Heart right ventricle (tissue), 16 donors: ENCODE measurements at regions of chr16 and their contacts with region 1.

Region 1: GRCh38 chr16:56866943-56867830 is 2.2 kb downstream of the SLC12A3 start:
- DNase-seq: peak in 1 of 2 donors; percentile 40
- ATAC-seq: peak in 6 of 8 donors; percentile 15 to 53 (median 36)
- H3K4me3 ChIP-seq: no peak overlapping the region
- H3K27ac ChIP-seq: no peak overlapping the region
- H3K4me1 ChIP-seq: peaks cover 0 to 19% (median 6%) of the 10 kb centered on the region in 9 donors
- H3K27me3 ChIP-seq: no peaks in the 10 kb centered on the region
- CTCF ChIP-seq: peak; percentile 71 to 86 (median 81)

Region 2: DNA sequence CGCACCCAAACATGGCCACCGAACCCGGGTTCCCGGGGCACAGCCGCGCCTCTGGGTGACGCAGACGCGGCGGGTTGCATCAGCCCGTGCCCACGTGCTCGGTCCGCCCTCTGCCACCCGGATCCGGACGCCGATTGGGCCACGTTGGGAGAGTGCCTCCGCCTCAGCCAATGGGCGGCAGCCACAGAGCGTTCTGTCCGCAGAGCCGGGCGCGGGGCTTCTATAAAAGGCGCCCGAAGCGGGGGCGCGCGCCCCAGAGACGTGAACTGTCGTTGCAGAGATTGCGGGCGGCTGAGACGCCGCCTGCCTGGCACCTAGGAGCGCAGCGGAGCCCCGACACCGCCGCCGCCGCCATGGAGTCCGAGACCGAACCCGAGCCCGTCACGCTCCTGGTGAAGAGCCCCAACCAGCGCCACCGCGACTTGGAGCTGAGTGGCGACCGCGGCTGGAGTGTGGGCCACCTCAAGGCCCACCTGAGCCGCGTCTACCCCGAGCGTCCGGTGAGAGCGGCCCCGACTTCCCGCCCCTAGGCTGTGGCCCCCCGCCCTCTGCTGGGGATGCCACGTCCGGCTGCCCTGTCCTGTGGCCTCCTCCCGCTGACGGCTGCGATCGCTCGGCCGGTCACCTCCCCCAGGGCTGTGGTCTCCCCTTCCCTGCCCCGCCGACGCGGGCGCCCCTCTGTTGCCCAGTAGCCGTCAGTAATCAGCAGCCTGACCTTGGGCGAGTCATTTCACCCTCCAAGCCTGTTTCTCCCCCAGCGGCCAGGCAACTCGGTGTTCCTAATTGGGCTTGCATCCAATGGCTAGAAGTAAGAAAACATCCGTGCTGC is 64.9 kb after region 1 on chr16 and contains the start of gene HERPUD1:
- intact Hi-C with region 1: loop called in 3 of 10 experiments (anchors 5 kb)
- DNase-seq: peak; percentile 99
- ATAC-seq: peak; percentile 94 to 98 (median 96)
- H3K4me3 ChIP-seq: peak within 1 kb of the TSS; percentile 61 to 100 (median 95)
- H3K27ac ChIP-seq: peak within 1 kb of the TSS; percentile 95 to 100 (median 99)
- H3K4me1 ChIP-seq: peaks cover 8 to 50% (median 47%) of the 10 kb centered on the region in 9 donors
- H3K27me3 ChIP-seq: no peaks in the 10 kb centered on the region
- CTCF ChIP-seq: peak in 3 of 9 donors; percentile 30 to 35 (median 33)
- total RNA-seq, gene HERPUD1: 107 to 175 (median 128) TPM

Region 3: DNA sequence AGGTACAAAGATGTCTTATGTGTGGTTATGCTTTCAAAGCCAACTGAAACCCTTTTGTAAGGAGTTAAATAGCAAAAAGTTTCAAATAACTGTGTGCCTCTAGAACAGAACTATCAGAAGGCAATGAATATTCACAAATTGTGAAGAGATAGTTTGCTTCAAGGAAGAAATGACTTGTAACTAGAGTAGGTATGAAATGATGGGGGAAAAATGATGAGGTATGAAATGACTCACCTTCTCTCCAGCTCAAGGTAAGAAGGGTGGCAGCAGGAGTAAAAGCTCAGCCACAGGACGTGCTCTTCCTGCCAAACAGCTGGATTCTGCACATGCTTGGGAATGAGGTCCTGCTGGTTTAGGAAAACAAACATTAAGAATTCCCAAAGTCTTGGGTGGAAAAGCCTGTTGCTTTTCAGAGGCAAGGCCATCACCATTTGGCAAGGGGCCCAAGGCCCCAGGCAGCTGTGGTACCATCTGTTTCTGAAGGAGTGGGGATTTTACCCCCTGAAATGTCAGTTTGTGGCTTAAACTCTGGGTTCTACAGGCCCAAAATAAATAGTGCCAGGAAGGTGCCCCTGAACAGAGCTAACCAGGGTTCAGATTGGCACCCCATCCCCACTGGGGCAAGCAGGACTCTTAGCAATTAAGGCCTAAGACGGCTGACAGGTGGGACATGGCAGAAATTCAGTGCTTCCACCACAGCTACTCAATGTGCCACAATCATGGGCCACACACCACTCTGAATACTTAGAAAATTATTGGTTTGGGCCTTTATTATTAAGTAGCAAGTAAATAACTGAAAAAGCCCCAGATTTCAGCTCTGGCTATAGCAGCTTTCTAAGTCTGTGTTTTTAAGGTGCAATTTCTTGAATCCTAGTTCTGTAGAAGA is 78.0 kb after region 1 on chr16:
- intact Hi-C with region 1: loop called in 9 of 10 experiments (anchors 2 to 5 kb)
- DNase-seq: no peak
- ATAC-seq: no peak
- H3K4me3 ChIP-seq: no peak overlapping the region
- H3K27ac ChIP-seq: peak overlapping the region in 1 of 10 donors; percentile 51
- H3K4me1 ChIP-seq: peaks cover 0 to 26% (median 4%) of the 10 kb centered on the region in 9 donors
- H3K27me3 ChIP-seq: no peaks in the 10 kb centered on the region
- CTCF ChIP-seq: no peak

Region 4: DNA sequence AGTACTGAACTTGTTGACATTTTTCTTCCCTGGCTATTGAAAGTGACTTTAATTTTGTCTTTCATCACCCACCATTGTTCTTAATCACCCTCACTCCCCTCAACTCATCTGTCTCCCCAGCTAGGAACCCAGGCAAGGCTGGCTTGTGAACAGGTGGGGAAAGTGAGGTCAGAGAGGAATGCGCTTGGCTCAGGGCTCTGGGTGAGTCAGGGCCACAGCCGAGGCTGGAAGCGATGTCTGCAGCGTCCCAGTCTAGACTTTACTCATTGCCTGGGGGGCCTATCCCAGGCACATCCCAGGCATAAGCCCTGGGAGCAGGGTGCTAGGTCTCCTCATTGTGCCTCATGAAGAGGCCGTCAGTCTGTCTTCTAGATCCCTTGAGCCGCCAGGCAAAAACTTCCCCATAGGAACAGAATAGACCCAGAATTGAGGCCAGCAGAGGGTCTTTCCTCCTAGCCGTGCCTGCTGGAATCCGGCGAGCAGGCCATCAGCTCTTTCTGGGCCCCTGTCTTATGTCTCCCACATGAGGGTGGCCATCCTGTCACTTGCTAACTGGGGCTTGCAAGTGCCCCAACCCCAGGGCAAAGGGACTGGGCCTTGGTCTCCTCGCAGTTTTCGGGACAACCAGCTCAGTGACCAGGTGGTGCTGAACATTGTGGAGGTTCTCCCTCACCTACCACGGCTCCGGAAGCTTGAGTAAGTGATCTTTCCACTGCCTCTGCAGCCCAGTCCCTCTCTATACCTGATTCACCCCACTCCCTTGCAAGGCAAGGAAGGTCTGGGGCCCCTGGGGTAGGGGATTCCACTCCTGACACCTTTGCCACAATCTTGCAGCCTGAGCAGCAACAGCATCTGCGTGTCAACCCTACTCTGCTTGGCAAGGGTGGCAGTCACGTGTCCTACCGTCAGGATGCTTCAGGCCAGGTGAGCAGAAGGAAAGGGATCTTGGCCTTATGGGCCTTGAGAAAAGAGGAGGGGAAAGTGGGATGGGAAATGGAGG is 162.3 kb after region 1 on chr16:
- intact Hi-C with region 1: loop called in 3 of 10 experiments (anchors 10 kb)
- DNase-seq: no peak
- ATAC-seq: no peak
- H3K4me3 ChIP-seq: no peak overlapping the region
- H3K27ac ChIP-seq: no peak overlapping the region
- H3K4me1 ChIP-seq: peaks cover 0 to 42% (median 0%) of the 10 kb centered on the region in 9 donors
- H3K27me3 ChIP-seq: no peaks in the 10 kb centered on the region
- CTCF ChIP-seq: no peak

Region 5: GRCh38 chr16:57045694-57046381 is 178.7 kb after region 1 on chr16:
- intact Hi-C with region 1: loop called in 8 of 10 experiments (anchors 1 to 10 kb)
- DNase-seq: peak; percentile 71 to 73
- ATAC-seq: peak; percentile 55 to 83 (median 70)
- H3K4me3 ChIP-seq: peak overlapping the region in 2 of 10 donors; percentile 6 to 27
- H3K27ac ChIP-seq: peak overlapping the region in 1 of 10 donors; percentile 36
- H3K4me1 ChIP-seq: peaks cover 0 to 45% (median 11%) of the 10 kb centered on the region in 9 donors
- H3K27me3 ChIP-seq: no peaks in the 10 kb centered on the region
- CTCF ChIP-seq: peak; percentile 23 to 77 (median 65)

Region 6: DNA sequence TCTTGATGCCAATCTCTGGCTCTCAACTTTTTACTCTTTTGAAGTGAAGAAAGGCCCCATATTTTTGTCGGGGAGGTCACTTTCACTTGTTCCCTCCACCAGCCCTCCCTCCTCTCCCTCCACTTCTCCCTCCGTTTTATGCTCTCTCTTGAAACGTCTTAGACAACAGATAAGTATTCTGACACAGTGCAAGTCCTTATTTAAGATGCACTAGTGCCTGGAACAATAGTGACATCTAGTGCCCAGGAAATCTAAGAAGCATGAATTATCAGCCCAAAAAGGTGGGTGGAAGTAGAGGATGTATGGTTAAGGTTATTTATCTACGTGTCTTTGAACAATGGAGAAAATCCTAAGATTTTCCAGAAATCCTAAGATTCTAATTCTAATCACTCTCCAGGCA is 300.8 kb after region 1 on chr16:
- intact Hi-C with region 1: loop called in 3 of 10 experiments (anchors 5 to 10 kb)
- DNase-seq: no peak
- ATAC-seq: peak; percentile 65 to 91 (median 80)
- H3K4me3 ChIP-seq: no peak overlapping the region
- H3K27ac ChIP-seq: peak overlapping the region in 1 of 10 donors; percentile 66
- H3K4me1 ChIP-seq: peaks cover 0 to 28% (median 20%) of the 10 kb centered on the region in 9 donors
- H3K27me3 ChIP-seq: no peaks in the 10 kb centered on the region
- CTCF ChIP-seq: peak; percentile 51 to 81 (median 65)